Endothelial cell of umbilical vein (primary cell): ENCODE measurements at regions of chr9 and their contacts with region 1.

Region 1: GRCh38 chr9:133485361-133486260 is 6.7 kb upstream of the SLC2A6 start:
- DNase-seq: no peak
- H3K4me3 ChIP-seq: no peak overlapping the region
- H3K27ac ChIP-seq: no peak overlapping the region
- H3K4me1 ChIP-seq: no peaks in the 10 kb centered on the region
- H3K27me3 ChIP-seq: no peaks in the 10 kb centered on the region
- CTCF ChIP-seq: no peak
- POLR2A ChIP-seq: no peak

Region 2: GRCh38 chr9:133023117-133023890 is 462.3 kb before region 1 on chr9:
- CTCF ChIA-PET with region 1: interaction called, 4 read pairs
- POLR2A ChIA-PET with region 1: no interaction called
- dilution Hi-C with region 1: no loop called
- intact Hi-C with region 1: loop called (anchors 1 kb)
- DNase-seq: no peak
- H3K4me3 ChIP-seq: no peak overlapping the region
- H3K27ac ChIP-seq: no peak overlapping the region
- H3K4me1 ChIP-seq: no peaks in the 10 kb centered on the region
- H3K27me3 ChIP-seq: no peaks in the 10 kb centered on the region
- CTCF ChIP-seq: no peak
- POLR2A ChIP-seq: no peak

Region 3: GRCh38 chr9:133342069-133342406 is 143.6 kb before region 1 on chr9:
- CTCF ChIA-PET with region 1: interaction called, 12 read pairs
- POLR2A ChIA-PET with region 1: no interaction called
- dilution Hi-C with region 1: no loop called
- intact Hi-C with region 1: no loop called
- DNase-seq: no peak
- H3K4me3 ChIP-seq: no peak overlapping the region
- H3K27ac ChIP-seq: no peak overlapping the region
- H3K4me1 ChIP-seq: no peaks in the 10 kb centered on the region
- H3K27me3 ChIP-seq: no peaks in the 10 kb centered on the region
- CTCF ChIP-seq: peak; percentile 9 to 29
- POLR2A ChIP-seq: no peak

Region 4: DNA sequence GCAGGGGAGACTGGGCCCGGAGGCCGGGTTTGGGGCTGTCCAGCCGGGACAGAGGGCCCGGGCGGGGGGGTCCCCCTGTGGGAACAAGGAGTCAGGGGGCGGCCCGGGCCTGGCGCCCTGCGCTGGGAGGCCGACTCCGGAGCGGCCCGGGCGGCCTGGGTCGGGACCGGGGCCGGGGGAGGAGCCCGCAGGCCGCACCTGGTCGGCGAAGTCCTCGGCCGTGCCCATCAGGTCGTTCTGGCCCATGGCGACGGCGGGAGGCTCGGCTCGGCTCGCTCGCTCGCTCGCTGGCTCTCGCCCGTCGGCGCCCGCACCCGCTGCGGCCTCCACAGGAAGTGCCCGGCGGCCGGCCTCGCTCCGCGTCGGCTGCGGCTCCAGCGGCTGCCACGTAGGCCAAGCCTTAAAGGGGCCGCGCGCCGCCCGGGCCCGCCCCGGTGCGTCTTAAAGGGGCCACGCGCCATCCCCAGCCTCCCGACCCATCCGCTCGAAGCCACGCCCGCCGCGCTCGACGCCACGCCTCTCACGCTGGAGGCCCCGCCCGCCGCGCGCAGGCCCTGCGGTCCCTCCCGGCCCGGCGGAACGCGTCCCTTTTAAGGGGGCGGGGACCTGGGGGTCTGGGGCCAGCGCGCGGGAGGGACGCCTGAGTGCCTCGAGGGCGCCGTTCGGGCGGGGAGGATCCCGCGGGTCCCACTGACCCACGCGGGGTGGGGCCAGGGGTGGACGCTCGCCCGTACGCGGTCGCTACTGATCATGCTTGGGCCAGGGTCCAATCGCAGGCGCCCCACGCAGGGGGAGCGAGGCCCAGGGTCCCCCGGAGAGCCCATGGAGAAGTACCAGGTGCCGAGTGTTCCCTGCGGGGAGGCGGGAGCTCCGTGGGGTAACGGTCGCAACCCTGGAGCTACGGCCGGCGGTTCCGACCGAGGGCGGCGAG is 109.6 kb before region 1 on chr9 and contains the starts of genes STKLD1 and SURF4:
- CTCF ChIA-PET with region 1: interaction called, 10 read pairs
- POLR2A ChIA-PET with region 1: no interaction called
- dilution Hi-C with region 1: no loop called
- intact Hi-C with region 1: no loop called
- DNase-seq: peak; percentile 98
- H3K4me3 ChIP-seq: peak within 1 kb of the TSS; percentile 76 to 99 (median 99)
- H3K27ac ChIP-seq: peak within 1 kb of the TSS; percentile 85
- H3K4me1 ChIP-seq: peaks cover 10% of the 10 kb centered on the region
- H3K27me3 ChIP-seq: no peaks in the 10 kb centered on the region
- CTCF ChIP-seq: no peak
- POLR2A ChIP-seq: peak; percentile 84
- total RNA-seq, gene STKLD1: 0.77 and 0.85 TPM in 2 replicates
- total RNA-seq, gene SURF4: 216 and 230 TPM in 2 replicates

Region 5: DNA sequence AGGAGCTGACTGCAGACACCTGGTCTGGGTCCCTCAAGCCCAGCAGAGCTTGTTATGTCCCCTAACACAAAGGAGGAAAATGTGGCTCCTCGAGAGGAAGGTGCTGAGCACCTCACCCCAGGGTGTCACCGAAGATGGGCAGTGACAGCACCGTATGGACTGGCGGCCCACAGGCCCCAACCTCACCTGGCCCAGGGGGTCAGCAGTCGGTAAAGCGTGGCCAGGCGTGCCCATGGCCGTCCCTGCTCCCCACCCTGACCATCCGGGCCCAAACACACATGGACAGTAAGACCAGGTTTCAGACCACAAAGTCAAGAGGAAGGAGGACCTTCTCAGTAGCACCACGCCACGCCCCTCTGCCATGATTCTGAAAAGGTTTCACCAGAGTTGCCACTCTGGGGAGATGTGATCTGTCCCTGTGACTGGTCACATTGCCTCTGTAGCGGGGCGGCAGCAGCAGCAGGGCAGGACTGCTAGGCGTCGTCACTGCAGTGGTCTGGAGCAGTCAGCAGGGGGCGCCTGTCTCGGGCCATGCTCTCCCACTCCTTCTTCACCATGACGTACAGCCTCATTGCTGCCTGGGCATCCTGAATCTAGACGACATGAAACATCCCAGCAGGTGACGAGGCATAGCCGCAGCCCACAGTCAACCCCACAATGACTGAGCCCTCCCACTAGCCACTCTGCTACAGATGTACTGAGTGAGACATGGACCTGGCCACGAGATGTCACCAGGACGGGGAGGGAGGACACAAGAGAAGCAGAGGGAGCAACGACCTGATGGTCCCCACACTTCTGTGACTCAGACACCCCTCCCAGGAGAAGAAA is 78.9 kb before region 1 on chr9:
- CTCF ChIA-PET with region 1: interaction called, 3 read pairs
- POLR2A ChIA-PET with region 1: no interaction called
- dilution Hi-C with region 1: no loop called
- intact Hi-C with region 1: loop called (anchors 1 kb)
- DNase-seq: peak; percentile 66
- H3K4me3 ChIP-seq: no peak overlapping the region
- H3K27ac ChIP-seq: no peak overlapping the region
- H3K4me1 ChIP-seq: peaks cover 6% of the 10 kb centered on the region
- H3K27me3 ChIP-seq: no peaks in the 10 kb centered on the region
- CTCF ChIP-seq: peak; percentile 97 to 98
- POLR2A ChIP-seq: no peak